Prostate gland (tissue), 2 donors: ENCODE measurements at regions of chr14 and their contacts with region 1.

Region 1: DNA sequence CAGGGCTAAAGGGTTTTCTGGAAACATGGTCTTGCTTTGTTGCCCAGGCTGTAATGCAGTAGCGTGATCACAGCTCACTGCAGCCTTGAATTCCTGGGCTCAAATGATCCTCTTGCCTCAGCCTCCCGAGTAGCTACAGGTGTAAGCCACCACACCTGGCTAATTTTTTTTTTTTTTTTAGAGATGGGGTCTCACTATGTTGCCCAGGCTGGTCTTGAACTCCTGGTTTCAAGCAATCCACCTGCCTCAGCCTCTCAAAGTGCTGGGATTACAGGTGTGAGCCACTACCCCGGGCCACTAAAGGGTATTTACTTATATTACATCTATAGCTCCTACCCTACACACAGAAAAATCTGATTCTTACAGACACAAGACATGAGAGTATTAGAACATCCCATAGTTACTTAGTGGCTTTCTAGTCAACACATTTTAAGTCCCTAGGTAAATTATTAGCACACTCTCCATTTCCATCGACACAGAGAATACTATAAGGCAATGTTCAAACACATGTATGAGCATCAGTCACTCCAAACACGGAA is 6.2 kb upstream of the DCAF11 start:
- DNase-seq: no peak
- H3K4me3 ChIP-seq: no peak overlapping the region
- H3K27ac ChIP-seq: no peak overlapping the region
- H3K4me1 ChIP-seq: no peaks in the 10 kb centered on the region
- H3K27me3 ChIP-seq: no peaks in the 10 kb centered on the region
- CTCF ChIP-seq: no peak
- POLR2A ChIP-seq: no peak

Region 2: DNA sequence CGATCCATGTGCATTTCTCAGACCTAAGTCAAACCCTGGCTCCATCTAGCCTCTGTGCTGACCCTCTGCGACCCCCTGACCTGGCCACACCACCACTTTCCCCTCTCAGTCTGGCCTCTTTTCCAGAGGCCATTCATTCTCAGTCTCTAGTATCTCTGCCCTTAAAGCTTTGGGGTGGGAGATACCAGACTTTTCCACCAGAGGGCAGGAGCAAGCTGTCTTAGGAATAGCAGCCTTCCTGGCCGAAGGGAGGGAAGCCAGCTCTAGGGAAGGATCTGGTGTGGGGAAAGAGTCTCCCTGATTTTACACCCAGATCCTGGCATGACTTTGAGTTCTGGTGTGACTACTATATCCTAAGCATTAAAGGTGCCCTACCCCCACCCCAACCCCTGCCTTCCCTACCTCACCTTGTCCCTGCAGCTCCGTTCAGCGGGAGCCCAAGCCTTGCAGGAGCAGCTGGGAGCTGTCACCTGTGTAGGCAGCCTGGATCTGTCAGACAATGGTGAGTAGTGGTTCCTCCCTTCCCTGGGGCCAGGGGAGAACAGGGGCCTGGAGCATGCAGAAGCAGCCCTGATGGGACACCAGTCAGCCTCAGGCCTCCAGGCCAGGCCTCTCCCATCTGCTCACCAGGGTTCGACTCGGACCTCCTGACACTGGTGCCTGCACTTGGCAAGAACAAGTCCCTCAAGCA is 50.0 kb before region 1 on chr14:
- intact Hi-C with region 1: loop called (anchors 5 kb)
- DNase-seq: peak; percentile 86
- H3K4me3 ChIP-seq: no peak overlapping the region
- H3K27ac ChIP-seq: no peak overlapping the region
- H3K4me1 ChIP-seq: no peaks in the 10 kb centered on the region
- H3K27me3 ChIP-seq: no peaks in the 10 kb centered on the region
- CTCF ChIP-seq: peak in 3 of 4 experiments; percentile 88 to 95 (median 89)
- POLR2A ChIP-seq: no peak